Gastrocnemius medialis (tissue), 4 donors: ENCODE measurements at regions of chr2 and their contacts with region 1.

Region 1: DNA sequence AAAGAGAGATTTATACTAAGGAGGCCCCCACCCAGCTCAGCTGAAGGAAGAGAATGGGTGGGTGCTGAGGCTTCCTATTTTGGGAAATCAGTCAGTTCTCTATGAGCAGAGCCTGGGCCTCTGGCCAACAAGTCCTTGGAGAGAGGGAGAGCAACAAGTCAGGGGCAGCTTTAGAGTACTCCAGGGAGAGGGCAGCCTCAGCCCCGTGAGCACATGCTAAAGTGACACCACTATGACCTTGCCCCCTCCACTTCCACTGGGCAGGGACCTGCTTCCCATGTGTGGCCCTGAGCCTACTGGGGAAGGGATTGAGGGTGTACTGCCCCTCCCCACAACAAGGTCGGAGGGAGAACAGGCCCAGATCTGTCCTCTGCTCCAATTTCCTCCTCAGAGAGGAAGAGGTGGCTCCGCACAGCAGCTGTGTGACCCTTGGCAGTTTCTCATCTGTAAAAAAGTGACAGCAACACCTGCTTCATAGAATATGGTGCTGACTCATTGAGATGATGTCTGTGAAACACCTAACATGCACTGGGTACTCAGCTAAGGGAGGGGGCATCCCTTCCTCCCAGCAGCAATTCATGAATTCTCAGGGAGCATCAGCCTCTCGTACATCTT is 72.9 kb downstream of the CLHC1 start:
- DNase-seq: peak in 1 of 2 donors; percentile 46
- ATAC-seq: peak; percentile 69 to 76
- H3K4me3 ChIP-seq: no peak overlapping the region
- H3K27ac ChIP-seq: peak overlapping the region in 3 of 4 donors; percentile 53 to 61 (median 58)
- H3K4me1 ChIP-seq: peaks cover 21 to 43% of the 10 kb centered on the region in 2 donors
- H3K27me3 ChIP-seq: no peaks in the 10 kb centered on the region
- CTCF ChIP-seq: no peak
- POLR2A ChIP-seq: no peak

Region 2: GRCh38 chr2:54122939-54123338 is 1036.2 kb before region 1 on chr2:
- in situ Hi-C with region 1: no loop called
- intact Hi-C with region 1: no loop called
- DNase-seq: peak; percentile 67 to 71
- ATAC-seq: peak; percentile 100
- H3K4me3 ChIP-seq: no peak overlapping the region
- H3K27ac ChIP-seq: peak overlapping the region; percentile 78 to 90 (median 88)
- H3K4me1 ChIP-seq: peaks cover 27 to 31% of the 10 kb centered on the region in 2 donors
- H3K27me3 ChIP-seq: no peaks in the 10 kb centered on the region
- CTCF ChIP-seq: no peak
- POLR2A ChIP-seq: no peak

Region 3: DNA sequence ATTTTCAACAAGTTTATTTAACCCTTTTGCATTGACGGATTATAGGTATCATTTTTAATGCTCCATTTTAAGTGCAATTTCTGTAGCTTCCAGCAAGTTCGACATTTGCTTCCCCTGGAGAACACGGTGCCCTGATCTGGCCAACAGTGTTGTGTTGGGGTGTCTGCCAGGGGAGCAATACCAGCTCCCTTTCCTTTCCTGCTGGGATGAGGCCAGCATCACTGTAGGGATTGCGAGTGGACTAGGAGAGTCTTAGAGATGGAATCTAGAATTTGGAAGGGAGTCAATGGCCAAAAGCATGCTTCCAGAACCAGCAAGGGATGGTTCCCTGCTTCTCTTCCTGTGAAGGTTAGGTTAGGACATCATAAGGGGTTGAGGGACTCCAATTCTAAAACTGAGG is 244.0 kb before region 1 on chr2:
- in situ Hi-C with region 1: no loop called
- intact Hi-C with region 1: no loop called
- DNase-seq: no peak
- ATAC-seq: no peak
- H3K4me3 ChIP-seq: no peak overlapping the region
- H3K27ac ChIP-seq: no peak overlapping the region
- H3K4me1 ChIP-seq: no peaks in the 10 kb centered on the region
- H3K27me3 ChIP-seq: no peaks in the 10 kb centered on the region
- CTCF ChIP-seq: no peak
- POLR2A ChIP-seq: no peak

Region 4: DNA sequence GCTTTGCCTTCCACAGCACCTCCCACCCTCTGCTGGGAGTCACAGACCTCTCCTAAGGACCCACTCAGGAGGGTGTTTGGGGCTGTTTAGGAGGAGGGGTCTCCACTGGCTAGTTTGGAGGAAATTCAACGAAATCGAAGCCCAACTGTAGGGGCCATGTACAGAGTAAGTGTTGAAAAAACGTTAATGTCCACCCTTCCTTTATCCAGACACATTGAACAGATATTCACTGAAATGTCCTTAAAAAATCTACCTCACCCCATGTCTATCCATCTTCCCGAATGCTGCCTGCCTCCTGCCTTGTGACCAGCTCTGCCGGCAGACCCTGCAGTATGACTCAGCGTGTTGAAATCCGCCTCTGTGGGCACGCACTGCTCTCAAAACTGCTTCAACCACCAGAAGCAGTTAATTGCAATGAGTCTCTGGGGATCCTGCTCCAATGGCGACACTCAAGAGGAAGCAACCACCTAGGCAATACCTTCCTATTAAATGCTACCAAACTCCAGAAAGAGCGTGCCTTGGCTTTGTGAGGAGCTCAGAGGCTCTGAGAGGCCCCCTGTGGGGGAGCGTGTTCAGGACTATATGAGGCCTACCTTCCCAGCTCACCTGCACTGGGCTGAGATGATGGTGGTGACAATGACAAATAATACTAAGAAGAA is 47.4 kb before region 1 on chr2:
- in situ Hi-C with region 1: no loop called
- intact Hi-C with region 1: loop called (anchors 5 kb)
- DNase-seq: peak; percentile 52 to 75
- ATAC-seq: peak; percentile 74 to 77
- H3K4me3 ChIP-seq: no peak overlapping the region
- H3K27ac ChIP-seq: peak overlapping the region; percentile 64 to 75 (median 72)
- H3K4me1 ChIP-seq: peaks cover 20 to 24% of the 10 kb centered on the region in 2 donors
- H3K27me3 ChIP-seq: no peaks in the 10 kb centered on the region
- CTCF ChIP-seq: no peak
- POLR2A ChIP-seq: no peak

Region 5: DNA sequence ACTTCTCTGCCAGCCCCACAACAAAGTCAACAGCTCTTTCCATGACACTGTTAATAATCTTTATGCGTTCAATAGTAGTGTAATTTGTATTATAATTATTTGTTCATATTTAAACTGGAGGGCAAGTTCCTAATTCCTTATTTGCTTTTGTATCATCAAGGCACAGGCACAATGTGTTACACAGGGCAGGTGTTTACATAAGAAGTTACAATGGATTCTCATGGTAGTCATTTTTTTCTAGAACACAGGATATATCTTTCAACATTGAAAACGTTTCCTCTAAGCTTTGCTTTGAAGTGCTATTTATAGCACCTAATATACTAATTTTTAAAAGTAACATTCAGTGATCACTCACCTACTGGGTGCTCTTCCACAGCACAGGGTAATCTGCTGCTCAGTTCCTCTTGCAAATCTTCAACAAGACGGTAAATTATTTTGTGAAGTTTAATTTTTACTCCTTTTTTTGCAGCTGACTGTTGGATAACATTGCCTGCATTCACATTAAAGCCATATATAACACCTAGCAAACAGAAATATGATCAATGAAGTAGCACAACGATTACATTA is 80.6 kb after region 1 on chr2:
- in situ Hi-C with region 1: no loop called
- intact Hi-C with region 1: no loop called
- DNase-seq: no peak
- ATAC-seq: no peak
- H3K4me3 ChIP-seq: no peak overlapping the region
- H3K27ac ChIP-seq: no peak overlapping the region
- H3K4me1 ChIP-seq: peaks cover 0 to 2% of the 10 kb centered on the region in 2 donors
- H3K27me3 ChIP-seq: no peaks in the 10 kb centered on the region
- CTCF ChIP-seq: no peak
- POLR2A ChIP-seq: no peak